ENCODE measurements at regions of chr1 and their contacts with region 1.

Region 1: DNA sequence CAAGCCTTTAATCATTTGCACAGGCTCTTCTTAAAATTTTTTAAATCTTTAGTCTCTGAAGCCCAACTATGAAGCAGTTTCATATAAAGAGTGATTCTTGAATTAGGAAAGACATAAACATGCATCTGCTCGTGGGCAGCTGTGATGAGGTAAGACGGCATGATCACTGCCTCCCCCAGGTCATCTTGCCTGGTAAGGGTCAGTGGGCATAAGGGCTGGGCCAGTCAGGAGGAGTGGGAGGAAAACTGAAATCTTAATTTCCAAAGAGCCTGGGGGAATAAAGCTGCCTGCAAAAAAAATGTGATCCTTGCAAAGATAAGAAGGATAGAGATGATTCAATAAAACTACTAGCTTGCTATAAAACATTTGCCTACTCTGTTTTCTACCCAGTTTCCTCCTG is 197.7 kb downstream of the LMX1A start:
- DNase-seq: no peak
- H3K27ac ChIP-seq: no peak overlapping the region
- CTCF ChIP-seq: no peak

Region 2: GRCh38 chr1:165144757-165145397 is 13.9 kb before region 1 on chr1:
- CTCF ChIA-PET with region 1: interaction called, 11 read pairs
- POLR2A ChIA-PET with region 1: no interaction called
- DNase-seq: peak; percentile 41
- H3K27ac ChIP-seq: no peak overlapping the region
- CTCF ChIP-seq: peak; percentile 69

Region 3: GRCh38 chr1:165173409-165173808 is 14.6 kb after region 1 on chr1:
- CTCF ChIA-PET with region 1: no interaction called
- POLR2A ChIA-PET with region 1: no interaction called
- DNase-seq: no peak
- H3K27ac ChIP-seq: no peak overlapping the region
- CTCF ChIP-seq: no peak

Measured in RWPE1 (cell line).